Naive thymus-derived CD4-positive, alpha-beta T cell (primary cell): ENCODE measurements at regions of chr7 and their contacts with region 1.

Region 1: GRCh38 chr7:130982160-130982638 is 248.2 kb upstream of the KLF14 start:
- DNase-seq: peak in 7 of 9 donors; percentile 33 to 62 (median 56)
- ATAC-seq: peak; percentile 88
- H3K4me3 ChIP-seq: peak overlapping the region; percentile 9
- H3K4me3 Mint-ChIP-seq: no peak overlapping the region
- H3K27ac ChIP-seq: peak overlapping the region; percentile 65
- H3K27ac Mint-ChIP-seq: no peak overlapping the region
- H3K4me1 ChIP-seq: peaks cover 45 to 61% of the 10 kb centered on the region in 2 donors
- H3K4me1 Mint-ChIP-seq: peaks cover 7 to 39% (median 11%) of the 10 kb centered on the region in 7 donors
- H3K27me3 ChIP-seq: no peaks in the 10 kb centered on the region
- H3K27me3 Mint-ChIP-seq: no peaks in the 10 kb centered on the region

Region 2: GRCh38 chr7:130598051-130598450 is 384.1 kb before region 1 on chr7:
- CTCF ChIA-PET with region 1: no interaction called
- POLR2A ChIA-PET with region 1: no interaction called
- intact Hi-C with region 1: no loop called
- DNase-seq: no peak
- ATAC-seq: no peak
- H3K4me3 ChIP-seq: no peak overlapping the region
- H3K4me3 Mint-ChIP-seq: no peak overlapping the region
- H3K27ac ChIP-seq: no peak overlapping the region
- H3K27ac Mint-ChIP-seq: no peak overlapping the region
- H3K4me1 ChIP-seq: no peaks in the 10 kb centered on the region
- H3K4me1 Mint-ChIP-seq: no peaks in the 10 kb centered on the region
- H3K27me3 ChIP-seq: no peaks in the 10 kb centered on the region
- H3K27me3 Mint-ChIP-seq: no peaks in the 10 kb centered on the region

Region 3: DNA sequence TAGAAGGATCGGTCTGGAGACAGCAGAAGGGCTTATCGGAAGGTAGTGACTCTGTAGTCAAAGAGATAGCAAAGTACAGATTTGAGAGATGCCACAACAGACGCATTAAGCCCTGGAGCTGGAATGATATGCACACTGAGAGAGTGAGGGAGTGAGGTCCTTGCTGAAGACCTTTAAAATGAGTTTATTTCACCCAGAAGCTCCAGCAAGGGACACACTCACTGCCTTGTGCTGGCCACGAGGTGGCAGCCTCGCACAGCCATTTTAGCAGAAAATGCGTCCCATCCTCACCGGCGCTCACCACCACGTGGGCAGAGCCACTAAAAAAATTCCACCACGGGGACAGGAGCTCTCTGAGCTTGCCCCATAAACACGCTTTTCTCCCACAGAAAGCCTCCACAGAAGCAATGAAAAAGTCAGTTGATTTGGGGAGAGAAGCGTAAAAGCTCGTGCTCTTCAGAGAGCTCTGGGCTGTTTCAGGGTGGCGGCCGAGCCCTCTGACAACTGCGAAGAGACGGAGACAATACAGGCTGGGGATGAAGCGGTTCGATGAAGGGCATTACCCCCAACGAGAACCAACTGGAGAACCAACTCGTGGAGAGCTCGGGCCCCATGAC is 85.2 kb before region 1 on chr7:
- CTCF ChIA-PET with region 1: interaction called, 15 read pairs
- POLR2A ChIA-PET with region 1: no interaction called
- intact Hi-C with region 1: loop called (anchors 1 kb)
- DNase-seq: peak; percentile 60 to 76 (median 69)
- ATAC-seq: peak; percentile 84
- H3K4me3 ChIP-seq: no peak overlapping the region
- H3K4me3 Mint-ChIP-seq: peak overlapping the region in 7 of 10 donors; percentile 16 to 67 (median 37)
- H3K27ac ChIP-seq: no peak overlapping the region
- H3K27ac Mint-ChIP-seq: peak overlapping the region; percentile 61 to 92 (median 84)
- H3K4me1 ChIP-seq: peaks cover 16 to 35% of the 10 kb centered on the region in 2 donors
- H3K4me1 Mint-ChIP-seq: peaks cover 49 to 86% (median 83%) of the 10 kb centered on the region in 7 donors
- H3K27me3 ChIP-seq: no peaks in the 10 kb centered on the region
- H3K27me3 Mint-ChIP-seq: no peaks in the 10 kb centered on the region

Region 4: DNA sequence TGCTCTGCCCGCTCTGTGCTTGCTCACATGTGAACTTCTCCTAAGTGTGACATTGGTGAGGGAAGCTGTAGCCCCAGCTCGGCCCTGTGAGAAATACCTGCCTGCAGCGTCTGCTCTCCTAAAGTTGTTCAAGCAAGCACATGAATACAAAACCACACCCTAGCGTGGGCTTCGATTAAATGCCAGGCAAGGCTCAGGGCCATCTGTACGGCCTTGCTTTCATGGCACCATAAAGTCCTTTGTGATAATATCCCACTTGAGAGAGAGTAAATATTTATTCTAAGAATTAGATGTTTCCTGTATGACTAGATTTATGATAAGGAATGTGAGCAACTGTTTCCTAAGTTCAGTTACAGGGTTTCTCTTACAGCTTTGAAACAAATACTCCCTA is 14.6 kb after region 1 on chr7:
- CTCF ChIA-PET with region 1: interaction called, 17 read pairs
- POLR2A ChIA-PET with region 1: interaction called, 3 read pairs
- intact Hi-C with region 1: loop called in 1 of 2 experiments (anchors 1 kb)
- DNase-seq: no peak
- ATAC-seq: peak; percentile 38
- H3K4me3 ChIP-seq: no peak overlapping the region
- H3K4me3 Mint-ChIP-seq: peak overlapping the region; percentile 38 to 77 (median 65)
- H3K27ac ChIP-seq: peak overlapping the region; percentile 45
- H3K27ac Mint-ChIP-seq: peak overlapping the region in 8 of 9 donors; percentile 63 to 91 (median 84)
- H3K4me1 ChIP-seq: peaks cover 42 to 60% of the 10 kb centered on the region in 2 donors
- H3K4me1 Mint-ChIP-seq: peaks cover 57 to 92% (median 88%) of the 10 kb centered on the region in 7 donors
- H3K27me3 ChIP-seq: no peaks in the 10 kb centered on the region
- H3K27me3 Mint-ChIP-seq: no peaks in the 10 kb centered on the region

Region 5: DNA sequence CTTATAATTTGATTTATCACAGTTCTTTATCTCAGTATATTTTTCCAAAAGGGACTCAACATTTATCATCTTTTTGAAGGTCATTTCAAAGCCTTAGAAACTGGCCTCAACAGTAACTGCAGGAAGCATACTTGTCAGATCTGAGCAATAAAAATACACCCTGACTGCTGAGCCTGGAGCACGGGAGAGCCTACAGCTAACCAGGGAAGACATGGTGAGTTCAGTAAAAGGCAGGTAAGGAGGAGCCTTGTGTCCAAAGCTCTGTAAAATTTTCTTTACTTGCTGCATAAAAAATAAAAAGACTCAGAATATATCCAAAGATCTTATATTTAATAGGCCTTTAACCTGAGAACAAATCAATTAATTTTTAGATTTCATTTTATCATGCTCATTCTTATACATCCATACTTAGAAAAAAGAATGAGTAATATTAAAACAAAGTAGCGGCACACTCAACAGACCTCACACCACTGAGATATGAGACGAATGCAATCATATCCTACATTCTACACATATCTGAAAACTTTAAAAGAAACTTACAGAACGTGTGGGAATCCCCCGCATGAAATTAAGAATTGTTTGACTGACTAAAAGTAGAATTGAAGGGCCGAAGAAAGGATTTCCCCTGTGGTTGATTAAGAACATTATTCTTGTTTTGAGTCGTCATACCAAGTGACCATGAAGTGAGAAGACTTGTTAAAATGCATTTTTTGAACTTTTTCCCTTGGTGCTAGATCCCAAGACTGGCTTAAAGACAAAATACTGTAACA is 49.1 kb after region 1 on chr7:
- CTCF ChIA-PET with region 1: interaction called, 4 read pairs
- POLR2A ChIA-PET with region 1: no interaction called
- intact Hi-C with region 1: loop called in 1 of 2 experiments (anchors 2 kb)
- DNase-seq: no peak
- ATAC-seq: peak; percentile 33
- H3K4me3 ChIP-seq: no peak overlapping the region
- H3K4me3 Mint-ChIP-seq: peak overlapping the region; percentile 25 to 80 (median 69)
- H3K27ac ChIP-seq: no peak overlapping the region
- H3K27ac Mint-ChIP-seq: peak overlapping the region in 8 of 9 donors; percentile 24 to 86 (median 78)
- H3K4me1 ChIP-seq: peaks cover 45 to 53% of the 10 kb centered on the region in 2 donors
- H3K4me1 Mint-ChIP-seq: peaks cover 57 to 96% (median 94%) of the 10 kb centered on the region in 7 donors
- H3K27me3 ChIP-seq: no peaks in the 10 kb centered on the region
- H3K27me3 Mint-ChIP-seq: no peaks in the 10 kb centered on the region

Region 6: GRCh38 chr7:131302876-131303707 is 320.9 kb after region 1 on chr7:
- CTCF ChIA-PET with region 1: no interaction called
- POLR2A ChIA-PET with region 1: no interaction called
- intact Hi-C with region 1: loop called in 1 of 2 experiments (anchors 1 kb)
- DNase-seq: peak in 6 of 9 donors; percentile 16 to 34 (median 24)
- ATAC-seq: peak; percentile 45
- H3K4me3 ChIP-seq: no peak overlapping the region
- H3K4me3 Mint-ChIP-seq: no peak overlapping the region
- H3K27ac ChIP-seq: no peak overlapping the region
- H3K27ac Mint-ChIP-seq: peak overlapping the region in 1 of 9 donors; percentile 68
- H3K4me1 ChIP-seq: no peaks in the 10 kb centered on the region
- H3K4me1 Mint-ChIP-seq: no peaks in the 10 kb centered on the region
- H3K27me3 ChIP-seq: no peaks in the 10 kb centered on the region
- H3K27me3 Mint-ChIP-seq: peaks cover 0 to 4% (median 0%) of the 10 kb centered on the region in 5 donors